ENCODE measurements at regions of chr15 and their contacts with region 1.

Region 1: DNA sequence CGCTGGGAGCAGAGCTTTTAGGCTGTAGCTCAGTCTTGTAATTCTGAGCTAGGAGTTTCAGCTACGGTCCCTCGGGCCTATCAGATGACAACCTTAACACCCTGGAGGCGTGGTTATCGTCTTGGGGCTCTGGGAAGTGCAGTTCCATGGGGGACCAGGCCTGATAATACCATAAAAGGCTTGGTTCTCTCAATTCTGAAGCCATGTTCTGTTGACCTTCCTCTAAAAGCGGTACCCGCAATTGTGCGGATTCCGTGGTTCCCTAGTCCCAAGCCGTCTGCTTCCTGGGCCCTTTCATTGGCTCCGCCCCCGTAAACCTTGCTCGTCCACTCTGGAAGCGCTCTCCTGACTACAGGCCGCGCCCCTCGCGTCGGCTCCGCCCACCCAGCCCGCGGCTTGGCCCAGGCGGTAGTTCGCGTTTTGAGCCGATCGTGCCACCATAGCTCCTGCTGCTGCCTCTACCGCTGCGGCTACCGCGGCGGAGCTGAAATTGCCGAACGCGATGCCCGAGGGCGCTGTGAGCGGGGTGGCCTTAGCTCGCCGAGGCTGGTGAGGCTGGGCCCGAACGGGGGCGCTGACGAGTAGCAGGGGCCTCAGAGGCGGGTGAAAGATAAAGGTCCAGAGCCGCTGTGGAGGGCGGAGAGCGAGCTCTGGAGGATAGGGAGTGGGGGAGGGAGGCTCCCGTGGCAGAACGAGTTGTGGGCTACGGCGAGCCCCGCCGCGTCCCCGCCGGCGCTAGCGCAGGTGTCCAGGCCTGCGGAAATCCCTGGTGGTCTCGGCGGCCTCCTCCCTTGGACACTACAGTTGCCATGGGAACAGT is at the start of gene MAPKBP1:
- DNase-seq: peak; percentile 97
- CTCF ChIP-seq: peak; percentile 88

Region 2: GRCh38 chr15:41660235-41661077 is 113.8 kb before region 1 on chr15 and contains the start of gene MGA:
- CTCF ChIA-PET with region 1: interaction called, 10 read pairs
- POLR2A ChIA-PET with region 1: no interaction called
- DNase-seq: peak; percentile 93
- CTCF ChIP-seq: peak; percentile 18

Region 3: GRCh38 chr15:41756198-41756597 is 18.1 kb before region 1 on chr15:
- CTCF ChIA-PET with region 1: interaction called, 11 read pairs
- POLR2A ChIA-PET with region 1: no interaction called
- DNase-seq: no peak
- CTCF ChIP-seq: no peak

Region 4: DNA sequence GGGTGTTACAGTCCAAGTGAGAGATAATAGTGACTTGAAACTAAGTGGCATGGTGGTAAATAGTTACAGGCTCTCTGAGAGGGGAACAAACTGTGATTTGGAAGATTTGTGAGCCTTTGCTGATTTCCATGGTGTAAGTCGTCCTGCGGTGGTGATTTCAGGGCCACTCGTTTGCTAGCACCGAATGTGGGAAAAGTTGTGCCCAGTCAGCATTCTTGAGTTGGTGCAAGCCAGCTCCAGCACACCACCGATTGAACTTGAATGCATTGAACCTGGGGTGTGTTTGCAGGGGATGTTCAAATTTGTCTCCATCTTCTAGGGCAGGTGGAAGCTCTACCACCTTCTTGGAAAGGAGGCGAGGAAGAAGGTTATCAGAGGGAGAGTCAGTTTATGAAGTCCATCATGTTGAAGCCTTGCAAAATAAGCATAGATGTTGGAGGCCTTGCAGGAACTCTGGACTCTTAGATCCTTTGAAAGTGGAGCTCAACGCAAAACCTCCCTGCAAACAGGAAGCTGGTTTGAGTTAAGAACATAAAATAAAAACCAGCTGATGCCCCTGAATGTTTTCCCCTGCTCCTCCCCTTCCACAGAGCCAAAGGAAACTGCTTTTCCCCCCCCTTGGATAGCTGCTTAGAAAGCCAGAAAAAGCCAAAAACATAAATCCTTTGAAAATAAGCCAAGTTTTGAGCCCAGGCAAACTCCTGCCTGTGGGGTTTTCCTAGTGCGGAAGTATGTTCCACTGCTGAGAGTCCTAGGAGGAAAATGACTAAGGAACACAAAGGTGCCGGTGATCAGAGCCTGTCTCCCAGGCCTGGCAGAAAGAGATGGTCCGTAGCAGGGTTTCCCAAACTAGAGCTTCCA is 22.0 kb after region 1 on chr15:
- CTCF ChIA-PET with region 1: interaction called, 107 read pairs
- POLR2A ChIA-PET with region 1: interaction called, 3 read pairs
- DNase-seq: no peak
- CTCF ChIP-seq: no peak

Region 5: DNA sequence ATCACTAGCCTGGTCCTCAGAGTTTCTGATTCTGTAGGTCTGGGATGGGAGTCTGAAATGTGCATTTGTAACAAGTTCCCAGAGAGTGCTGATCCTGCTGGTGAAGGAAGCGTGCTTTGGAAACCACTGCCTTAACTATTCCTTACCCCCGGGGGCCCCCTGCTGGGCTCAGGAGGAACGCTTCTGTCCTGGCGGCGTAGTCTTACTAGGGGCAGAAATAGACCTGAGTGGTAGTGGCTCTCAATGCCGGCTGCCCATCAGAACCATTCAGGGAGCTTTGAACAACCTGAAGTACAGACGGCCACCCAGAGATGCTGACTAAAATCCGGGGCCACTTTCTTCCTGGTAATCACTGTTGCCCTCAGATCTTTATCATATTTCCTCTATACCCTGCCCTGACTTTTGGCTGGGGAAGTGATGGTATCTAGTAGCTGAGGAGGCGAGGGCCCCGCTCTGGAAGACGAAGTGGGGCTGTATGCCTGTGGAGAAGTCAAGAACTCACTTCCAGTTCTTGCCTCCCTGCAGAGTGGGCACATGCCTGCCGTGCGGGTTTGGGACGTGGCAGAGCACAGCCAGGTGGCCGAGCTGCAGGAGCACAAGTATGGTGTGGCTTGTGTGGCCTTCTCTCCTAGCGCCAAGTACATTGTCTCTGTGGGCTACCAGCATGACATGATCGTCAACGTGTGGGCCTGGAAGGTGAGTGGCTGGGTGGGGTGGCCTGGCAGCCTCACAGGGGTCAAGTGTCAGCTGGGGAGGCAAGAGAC is 37.3 kb after region 1 on chr15:
- CTCF ChIA-PET with region 1: interaction called, 316 read pairs
- POLR2A ChIA-PET with region 1: no interaction called
- DNase-seq: peak; percentile 86
- CTCF ChIP-seq: peak; percentile 91

Region 6: DNA sequence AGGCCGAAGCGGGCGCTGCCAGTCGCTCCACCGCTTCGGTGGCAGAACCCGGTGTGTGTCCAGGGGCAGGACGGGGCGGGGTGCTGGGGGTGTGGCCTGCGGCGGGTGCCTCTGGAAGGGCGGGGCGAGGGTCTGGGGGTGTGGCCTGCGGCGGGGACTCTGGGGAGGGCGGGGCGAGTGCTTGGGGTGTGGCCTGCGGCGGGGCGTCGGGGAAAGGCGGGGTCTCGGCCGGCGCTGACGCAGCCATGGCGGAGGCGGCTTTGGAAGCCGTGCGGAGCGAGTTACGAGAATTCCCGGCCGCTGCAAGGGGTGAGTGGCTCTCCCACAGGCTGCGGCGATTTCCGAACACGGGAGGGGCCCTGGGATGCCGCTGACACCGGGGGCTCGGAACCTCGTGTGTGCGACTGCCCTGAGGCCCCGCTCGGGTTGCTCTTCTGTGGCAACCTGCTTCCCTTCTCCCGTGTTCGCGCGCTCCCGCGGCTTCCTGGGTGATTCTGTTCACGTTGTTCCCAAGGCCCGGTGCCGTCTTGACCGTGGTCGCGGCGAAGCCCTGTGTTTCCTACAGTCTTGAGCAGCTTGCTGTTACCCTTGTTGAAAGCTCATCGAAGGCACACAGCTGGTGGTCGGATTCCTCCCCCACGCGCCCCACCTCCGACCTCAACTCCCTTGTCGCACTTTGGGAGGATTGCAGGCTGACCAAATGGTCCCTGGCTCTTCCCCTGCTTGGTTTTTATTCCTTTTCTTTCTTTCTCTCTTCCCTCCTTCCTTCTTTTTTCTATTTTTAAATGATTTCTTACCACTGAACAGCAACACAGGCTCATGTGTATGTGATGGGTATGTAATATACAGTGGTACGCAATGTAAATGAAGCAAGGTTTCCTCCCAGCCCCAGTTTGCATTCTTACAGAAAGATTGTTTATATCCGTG is 53.9 kb after region 1 on chr15 and contains the start of gene JMJD7:
- CTCF ChIA-PET with region 1: interaction called, 25 read pairs
- POLR2A ChIA-PET with region 1: no interaction called
- DNase-seq: peak; percentile 100
- CTCF ChIP-seq: no peak

Region 7: DNA sequence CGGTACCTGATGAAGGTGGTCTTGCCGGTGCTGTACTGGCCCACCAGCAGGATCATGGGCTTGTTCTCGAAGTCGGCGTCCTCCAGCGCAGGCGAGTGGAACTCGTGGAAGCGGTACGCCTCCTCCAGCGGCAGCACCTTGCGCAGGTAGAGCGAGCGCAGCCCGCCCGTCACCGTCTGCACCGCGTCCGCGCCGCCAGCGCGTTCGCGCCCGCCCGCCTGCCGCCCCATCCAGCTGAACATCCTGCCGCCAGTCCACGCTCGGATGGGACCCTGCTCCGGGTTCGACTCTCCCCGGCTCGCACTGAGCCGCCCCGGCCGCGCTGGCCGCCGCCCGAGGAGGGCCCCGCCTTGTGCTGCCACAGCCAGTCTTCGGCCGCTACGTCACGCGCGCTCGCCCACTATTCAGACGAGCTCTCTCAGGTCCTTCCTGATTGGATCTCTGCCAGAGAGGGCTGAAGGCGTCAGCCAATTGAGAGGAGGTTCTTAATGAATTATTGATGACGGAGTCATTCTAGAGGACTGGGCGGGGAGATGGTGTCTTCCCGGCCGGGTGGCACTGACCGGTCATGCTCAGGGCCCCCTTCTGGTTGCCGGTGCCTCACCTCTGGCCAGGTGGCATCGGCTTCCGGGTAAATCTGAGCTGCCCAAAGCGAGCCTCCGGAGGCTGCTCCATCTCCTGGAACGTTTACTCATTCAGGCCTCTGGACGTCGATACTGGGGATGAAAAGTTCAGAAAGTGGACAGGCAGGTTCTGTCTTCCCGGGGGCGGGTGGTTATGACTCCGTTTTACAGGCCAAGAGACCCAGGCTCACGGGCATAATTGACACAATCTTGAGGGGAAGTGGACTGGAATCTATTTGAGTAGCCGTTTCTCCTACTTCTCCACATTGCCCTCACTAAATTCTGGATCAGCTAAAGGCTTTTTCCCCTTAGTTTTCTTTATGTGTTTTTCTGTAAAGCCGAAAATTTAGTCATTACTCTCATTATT is 198.3 kb after region 1 on chr15 and contains the start of gene EHD4:
- CTCF ChIA-PET with region 1: interaction called, 12 read pairs
- POLR2A ChIA-PET with region 1: interaction called, 3 read pairs
- DNase-seq: peak; percentile 96
- CTCF ChIP-seq: peak; percentile 47

Region 8: GRCh38 chr15:42665827-42666226 is 891.6 kb after region 1 on chr15:
- CTCF ChIA-PET with region 1: no interaction called
- POLR2A ChIA-PET with region 1: no interaction called
- DNase-seq: no peak
- CTCF ChIP-seq: no peak